CD4-positive, alpha-beta memory T cell (primary cell): ENCODE measurements at regions of chr13 and their contacts with region 1.

Region 1: GRCh38 chr13:74015137-74015536 is 119.1 kb downstream of the KLF12 start:
- DNase-seq: no peak
- H3K4me3 ChIP-seq: no peak overlapping the region
- H3K4me3 Mint-ChIP-seq: no peak overlapping the region
- H3K27ac ChIP-seq: no peak overlapping the region
- H3K27ac Mint-ChIP-seq: no peak overlapping the region
- H3K4me1 ChIP-seq: peaks cover 37% of the 10 kb centered on the region
- H3K4me1 Mint-ChIP-seq: peaks cover 38 to 84% (median 61%) of the 10 kb centered on the region in 4 donors
- H3K27me3 ChIP-seq: no peaks in the 10 kb centered on the region
- H3K27me3 Mint-ChIP-seq: no peaks in the 10 kb centered on the region

Region 2: GRCh38 chr13:73967397-73968165 is 47.6 kb before region 1 on chr13:
- CTCF ChIA-PET with region 1: no interaction called
- POLR2A ChIA-PET with region 1: no interaction called
- intact Hi-C with region 1: no loop called
- DNase-seq: no peak
- H3K4me3 ChIP-seq: no peak overlapping the region
- H3K4me3 Mint-ChIP-seq: no peak overlapping the region
- H3K27ac ChIP-seq: no peak overlapping the region
- H3K27ac Mint-ChIP-seq: peak overlapping the region in 1 of 7 donors; percentile 30
- H3K4me1 ChIP-seq: peaks cover 50% of the 10 kb centered on the region
- H3K4me1 Mint-ChIP-seq: peaks cover 57 to 84% (median 72%) of the 10 kb centered on the region in 4 donors
- H3K27me3 ChIP-seq: no peaks in the 10 kb centered on the region
- H3K27me3 Mint-ChIP-seq: no peaks in the 10 kb centered on the region

Region 3: GRCh38 chr13:74035896-74036295 is 20.8 kb after region 1 on chr13:
- CTCF ChIA-PET with region 1: no interaction called
- POLR2A ChIA-PET with region 1: no interaction called
- intact Hi-C with region 1: loop called (anchors 2 kb)
- DNase-seq: no peak
- H3K4me3 ChIP-seq: no peak overlapping the region
- H3K4me3 Mint-ChIP-seq: no peak overlapping the region
- H3K27ac ChIP-seq: no peak overlapping the region
- H3K27ac Mint-ChIP-seq: peak overlapping the region in 5 of 7 donors; percentile 16 to 60 (median 36)
- H3K4me1 ChIP-seq: peaks cover 56% of the 10 kb centered on the region
- H3K4me1 Mint-ChIP-seq: peaks cover 42 to 73% (median 64%) of the 10 kb centered on the region in 4 donors
- H3K27me3 ChIP-seq: no peaks in the 10 kb centered on the region
- H3K27me3 Mint-ChIP-seq: no peaks in the 10 kb centered on the region

Region 4: DNA sequence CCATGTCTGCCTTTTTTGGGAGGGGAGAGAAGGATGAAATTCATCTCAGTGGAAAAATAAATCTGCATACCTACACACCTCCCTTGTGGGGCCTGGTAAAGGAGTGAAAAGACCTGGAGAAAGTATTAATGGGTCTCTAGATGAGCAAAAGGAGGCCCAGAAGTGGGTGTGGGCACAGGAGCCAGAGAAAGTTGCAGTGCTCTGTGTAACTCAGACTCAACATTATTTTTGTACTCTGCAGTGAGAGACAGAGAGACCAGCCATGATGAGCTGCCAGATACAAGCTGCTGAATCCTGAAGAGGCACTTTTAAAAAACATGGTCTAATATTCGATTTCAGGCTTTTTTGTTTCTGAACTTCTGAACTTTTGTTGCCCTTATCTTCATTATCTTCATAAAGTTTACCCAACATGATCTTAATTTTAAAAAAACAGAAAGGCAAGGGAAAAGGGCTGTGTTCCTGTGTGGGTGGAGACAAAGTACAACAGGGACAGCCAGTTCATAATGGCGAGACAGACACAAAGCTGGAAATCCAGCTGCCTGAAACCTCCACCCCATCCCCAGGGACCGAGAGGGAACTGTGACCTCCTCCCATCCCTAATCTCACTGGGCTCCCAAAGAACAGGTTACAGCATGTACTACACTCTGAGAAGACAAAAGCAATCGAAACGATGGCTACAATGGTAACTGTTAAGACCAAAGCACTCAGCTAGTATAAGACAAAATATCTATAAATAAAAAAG is 41.8 kb after region 1 on chr13:
- CTCF ChIA-PET with region 1: interaction called, 3 read pairs
- POLR2A ChIA-PET with region 1: no interaction called
- intact Hi-C with region 1: loop called (anchors 5 kb)
- DNase-seq: no peak
- H3K4me3 ChIP-seq: no peak overlapping the region
- H3K4me3 Mint-ChIP-seq: peak overlapping the region in 5 of 8 donors; percentile 8 to 47 (median 17)
- H3K27ac ChIP-seq: no peak overlapping the region
- H3K27ac Mint-ChIP-seq: peak overlapping the region in 4 of 7 donors; percentile 24 to 61 (median 38)
- H3K4me1 ChIP-seq: peaks cover 95% of the 10 kb centered on the region
- H3K4me1 Mint-ChIP-seq: peaks cover 67 to 92% (median 83%) of the 10 kb centered on the region in 4 donors
- H3K27me3 ChIP-seq: no peaks in the 10 kb centered on the region
- H3K27me3 Mint-ChIP-seq: no peaks in the 10 kb centered on the region